Activated B cell treated with CpG ODN at 0.5 μM for 24 hours (primary cell): ENCODE measurements at regions of chr21 and their contacts with region 1.

Region 1: GRCh38 chr21:41926117-41926806 is 27.6 kb downstream of the C2CD2 start:
- DNase-seq: no peak
- ATAC-seq: peak; percentile 60
- H3K4me3 Mint-ChIP-seq: peak overlapping the region; percentile 90
- H3K27ac Mint-ChIP-seq: peak overlapping the region; percentile 98
- H3K4me1 Mint-ChIP-seq: peaks cover 90% of the 10 kb centered on the region
- H3K27me3 Mint-ChIP-seq: no peaks in the 10 kb centered on the region
- CTCF ChIP-seq: no peak

Region 2: DNA sequence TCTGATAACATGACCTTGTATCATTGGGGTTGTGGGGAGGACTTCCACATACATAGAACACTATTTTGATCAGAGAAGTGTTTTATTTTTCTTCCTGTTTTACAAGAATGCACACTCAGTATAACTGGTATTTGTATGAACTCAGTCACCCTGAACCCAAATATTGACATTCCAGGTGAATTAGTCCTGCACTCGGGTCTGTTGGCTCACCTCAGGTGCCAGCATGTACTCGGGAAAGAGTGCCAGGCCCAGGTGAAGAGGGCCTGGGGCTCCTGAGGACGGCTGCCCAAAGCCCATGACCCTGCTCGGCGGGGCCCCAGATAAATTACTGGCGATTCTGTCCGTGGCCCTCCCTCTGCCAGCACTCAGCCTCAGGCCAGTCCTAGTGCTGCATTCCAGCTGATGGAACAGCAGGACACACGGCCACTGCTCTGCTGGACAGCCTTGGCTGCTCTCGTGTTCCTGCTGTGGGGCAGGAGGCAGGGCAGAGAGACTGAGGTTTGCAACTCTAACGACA is 342.9 kb before region 1 on chr21:
- CTCF ChIA-PET with region 1: no interaction called
- POLR2A ChIA-PET with region 1: no interaction called
- intact Hi-C with region 1: no loop called
- DNase-seq: no peak
- ATAC-seq: no peak
- H3K4me3 Mint-ChIP-seq: no peak overlapping the region
- H3K27ac Mint-ChIP-seq: no peak overlapping the region
- H3K4me1 Mint-ChIP-seq: no peaks in the 10 kb centered on the region
- H3K27me3 Mint-ChIP-seq: peaks cover 6% of the 10 kb centered on the region
- CTCF ChIP-seq: no peak

Region 3: GRCh38 chr21:41761211-41762181 is 164.8 kb before region 1 on chr21:
- CTCF ChIA-PET with region 1: no interaction called
- POLR2A ChIA-PET with region 1: no interaction called
- intact Hi-C with region 1: no loop called
- DNase-seq: no peak
- ATAC-seq: no peak
- H3K4me3 Mint-ChIP-seq: no peak overlapping the region
- H3K27ac Mint-ChIP-seq: no peak overlapping the region
- H3K4me1 Mint-ChIP-seq: peaks cover 12% of the 10 kb centered on the region
- H3K27me3 Mint-ChIP-seq: peaks cover 56% of the 10 kb centered on the region
- CTCF ChIP-seq: no peak

Region 4: GRCh38 chr21:41879190-41879998 is 46.9 kb before region 1 on chr21 and contains the start of gene PRDM15:
- CTCF ChIA-PET with region 1: interaction called, 4 read pairs
- POLR2A ChIA-PET with region 1: interaction called, 15 read pairs
- intact Hi-C with region 1: loop called (anchors 2 kb)
- DNase-seq: peak; percentile 83
- ATAC-seq: peak; percentile 63
- H3K4me3 Mint-ChIP-seq: peak within 1 kb of the TSS; percentile 90
- H3K27ac Mint-ChIP-seq: peak within 1 kb of the TSS; percentile 93
- H3K4me1 Mint-ChIP-seq: peaks cover 39% of the 10 kb centered on the region
- H3K27me3 Mint-ChIP-seq: no peaks in the 10 kb centered on the region
- CTCF ChIP-seq: no peak
- total RNA-seq, gene PRDM15: 12.8 and 13.6 TPM in 2 replicates

Region 5: DNA sequence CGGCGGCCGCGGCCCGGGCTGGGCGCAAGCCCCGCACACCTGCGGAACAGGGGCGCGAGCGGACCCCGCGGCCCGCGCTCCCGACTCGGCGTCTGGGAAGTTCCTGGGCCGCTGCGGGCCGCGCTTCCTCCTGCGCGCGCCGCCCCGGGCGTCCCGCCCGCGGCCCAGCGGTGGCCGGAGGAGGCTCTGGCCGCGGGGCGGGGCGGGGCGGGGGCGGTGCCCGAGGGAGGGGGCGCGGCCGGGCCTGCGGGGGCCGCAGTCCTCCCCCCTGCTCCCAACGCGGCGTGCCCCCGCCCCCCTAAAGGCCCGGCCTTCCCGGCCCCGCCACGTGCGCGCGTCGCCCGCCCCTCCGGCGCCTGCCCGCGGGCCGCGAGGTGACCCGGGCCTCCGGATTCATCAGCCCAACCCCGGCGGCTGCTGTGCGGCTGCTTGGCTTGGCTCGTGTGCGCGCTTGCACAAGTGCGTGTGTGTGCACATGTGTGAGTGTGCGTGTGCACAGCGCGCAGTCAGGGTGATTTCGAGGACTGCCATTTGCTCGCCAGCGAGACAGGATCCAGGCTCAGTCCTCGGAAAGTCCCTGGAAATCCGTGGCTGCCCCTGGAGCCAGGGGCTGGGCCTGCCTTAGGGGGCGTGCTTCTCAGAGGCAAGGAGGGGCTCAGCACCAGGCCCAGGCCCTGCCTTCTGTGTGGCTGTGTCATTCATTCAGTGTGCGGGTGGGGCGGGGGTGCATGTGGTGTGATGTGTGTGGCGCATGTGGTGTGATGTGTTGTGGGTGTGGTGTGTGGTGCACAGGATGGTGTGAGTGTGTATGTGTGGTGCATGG is 27.8 kb after region 1 on chr21 and contains the start of gene C2CD2:
- CTCF ChIA-PET with region 1: no interaction called
- POLR2A ChIA-PET with region 1: no interaction called
- intact Hi-C with region 1: loop called (anchors 2 kb)
- DNase-seq: no peak
- ATAC-seq: peak; percentile 47
- H3K4me3 Mint-ChIP-seq: peak within 1 kb of the TSS; percentile 62
- H3K27ac Mint-ChIP-seq: no peak within 1 kb of the TSS
- H3K4me1 Mint-ChIP-seq: peaks cover 21% of the 10 kb centered on the region
- H3K27me3 Mint-ChIP-seq: peaks cover 17% of the 10 kb centered on the region
- CTCF ChIP-seq: no peak
- total RNA-seq, gene C2CD2: 6.7 TPM in 2 replicates

Region 6: DNA sequence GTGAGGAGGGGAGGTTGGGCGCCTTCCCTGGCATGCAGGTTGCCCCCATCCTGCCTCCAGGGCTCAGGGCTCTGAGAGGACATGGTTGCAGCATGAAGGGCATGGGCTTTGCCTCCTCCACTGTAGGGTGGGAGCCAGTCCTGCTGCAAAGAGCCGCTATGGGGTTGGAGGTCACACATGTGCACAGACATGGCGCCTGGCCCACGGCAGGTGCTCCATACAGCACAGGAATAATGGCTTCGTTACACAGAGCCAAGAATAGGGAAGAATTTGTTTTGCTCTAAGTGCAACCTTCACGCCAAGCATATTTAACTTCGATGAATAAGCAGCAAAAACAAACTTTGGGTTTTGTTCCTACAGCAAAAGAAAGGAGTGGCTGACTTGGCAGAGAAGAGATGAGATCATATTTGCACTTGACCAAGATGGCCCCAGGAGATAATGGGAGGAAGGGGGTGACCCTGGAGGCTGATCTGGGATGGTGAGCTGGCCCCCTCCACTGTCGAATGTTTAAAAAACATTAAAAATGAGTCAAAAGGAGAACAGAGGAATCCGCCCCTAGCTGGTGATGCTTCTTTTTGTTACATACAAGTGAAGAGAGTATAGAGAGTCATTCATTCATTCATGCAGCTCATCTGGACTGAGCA is 39.9 kb after region 1 on chr21:
- CTCF ChIA-PET with region 1: no interaction called
- POLR2A ChIA-PET with region 1: no interaction called
- intact Hi-C with region 1: loop called (anchors 5 kb)
- DNase-seq: no peak
- ATAC-seq: no peak
- H3K4me3 Mint-ChIP-seq: no peak overlapping the region
- H3K27ac Mint-ChIP-seq: no peak overlapping the region
- H3K4me1 Mint-ChIP-seq: peaks cover 18% of the 10 kb centered on the region
- H3K27me3 Mint-ChIP-seq: peaks cover 26% of the 10 kb centered on the region
- CTCF ChIP-seq: no peak

Region 7: GRCh38 chr21:42117229-42117966 is 191.1 kb after region 1 on chr21:
- CTCF ChIA-PET with region 1: interaction called, 7 read pairs
- POLR2A ChIA-PET with region 1: interaction called, 3 read pairs
- intact Hi-C with region 1: loop called (anchors 2 kb)
- DNase-seq: peak; percentile 61
- ATAC-seq: peak; percentile 85
- H3K4me3 Mint-ChIP-seq: peak overlapping the region; percentile 37
- H3K27ac Mint-ChIP-seq: no peak overlapping the region
- H3K4me1 Mint-ChIP-seq: peaks cover 48% of the 10 kb centered on the region
- H3K27me3 Mint-ChIP-seq: peaks cover 16% of the 10 kb centered on the region
- CTCF ChIP-seq: peak; percentile 70